ENCODE measurements at regions of chr12 and their contacts with region 1.

Region 1: GRCh38 chr12:100348657-100349454 is 8.0 kb upstream of the SLC17A8 start:
- DNase-seq: no peak
- ATAC-seq: peak in 1 of 2 donors; percentile 44

Region 2: DNA sequence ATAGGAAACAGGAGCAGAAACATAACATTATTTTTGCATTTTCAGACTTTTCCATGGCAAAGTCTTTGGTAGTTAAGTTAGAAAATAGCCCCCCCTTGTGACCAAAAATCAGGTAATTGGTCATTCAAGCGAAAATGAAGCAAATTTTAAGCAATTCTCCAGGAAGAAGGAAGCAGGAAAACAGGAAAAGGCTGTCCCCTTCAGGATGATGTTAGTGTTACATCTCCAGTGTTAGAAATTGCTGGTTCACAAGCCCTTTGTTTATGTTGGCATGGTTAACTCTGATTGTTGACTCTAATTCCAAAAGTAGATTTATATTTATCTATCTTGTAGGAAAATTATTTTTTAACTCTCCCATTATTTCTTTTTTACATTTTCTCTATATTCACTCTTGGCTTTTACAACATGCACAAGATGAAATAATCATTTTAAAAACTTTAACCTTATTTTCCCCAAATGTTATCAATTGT is 205.8 kb after region 1 on chr12:
- intact Hi-C with region 1: loop called in 1 of 2 experiments (anchors 5 kb)
- DNase-seq: no peak
- ATAC-seq: peak; percentile 77 to 80

Region 3: GRCh38 chr12:100733817-100734593 is 385.1 kb after region 1 on chr12:
- intact Hi-C with region 1: loop called in 1 of 2 experiments (anchors 5 kb)
- DNase-seq: no peak
- ATAC-seq: no peak

Measured in left cardiac atrium (tissue), 4 donors.